ENCODE measurements at regions of chr17 and their contacts with region 1.

Region 1: DNA sequence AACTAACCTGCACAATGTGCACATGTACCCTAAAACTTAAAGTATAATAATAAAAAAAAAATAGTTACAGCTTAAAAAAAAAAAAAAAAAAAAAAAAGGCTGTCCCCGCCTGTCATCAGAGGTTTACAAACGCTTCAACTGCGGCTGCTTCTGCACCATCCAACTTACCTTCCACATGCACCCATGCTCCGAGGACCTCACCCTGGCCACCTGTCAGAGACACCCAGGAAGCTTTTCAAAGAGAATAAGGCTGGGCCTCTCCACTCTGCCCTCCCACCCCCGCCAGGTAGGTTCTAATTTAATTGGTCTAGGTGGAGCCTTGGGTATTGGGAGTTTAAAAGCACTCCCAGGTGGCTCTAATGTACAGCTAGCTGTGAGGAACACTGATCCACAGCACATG is 64.9 kb downstream of the COPRS start:
- DNase-seq: no peak
- H3K4me3 ChIP-seq: no peak overlapping the region
- H3K27ac ChIP-seq: no peak overlapping the region
- H3K4me1 ChIP-seq: no peaks in the 10 kb centered on the region
- H3K27me3 ChIP-seq: 0 out of 2 replicates have a peak, but pooled peaks cover 3% of the 10 kb centered on the region
- CTCF ChIP-seq: no peak

Region 2: DNA sequence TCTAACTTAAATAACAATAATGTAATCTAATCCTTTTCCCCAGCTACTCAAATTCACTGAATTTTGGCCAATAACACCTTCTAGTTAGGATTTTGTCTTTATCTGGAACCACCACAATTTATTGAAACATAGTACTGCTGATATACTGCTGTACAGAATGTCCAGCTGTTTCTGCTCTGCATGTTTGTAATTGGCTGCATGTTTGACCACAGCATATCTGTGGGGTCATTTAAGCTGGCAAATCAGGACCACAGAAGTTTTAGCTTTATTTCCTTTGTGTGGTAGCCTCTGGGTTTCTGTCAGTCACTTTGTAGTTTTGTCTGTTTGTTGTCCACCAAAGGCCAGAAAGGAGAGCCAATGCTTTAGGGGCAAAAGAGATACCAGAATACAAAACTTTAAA is 424.8 kb before region 1 on chr17:
- CTCF ChIA-PET with region 1: no interaction called
- POLR2A ChIA-PET with region 1: no interaction called
- intact Hi-C with region 1: no loop called
- DNase-seq: no peak
- H3K4me3 ChIP-seq: no peak overlapping the region
- H3K27ac ChIP-seq: no peak overlapping the region
- H3K4me1 ChIP-seq: no peaks in the 10 kb centered on the region
- H3K27me3 ChIP-seq: no peaks in the 10 kb centered on the region
- CTCF ChIP-seq: no peak

Region 3: DNA sequence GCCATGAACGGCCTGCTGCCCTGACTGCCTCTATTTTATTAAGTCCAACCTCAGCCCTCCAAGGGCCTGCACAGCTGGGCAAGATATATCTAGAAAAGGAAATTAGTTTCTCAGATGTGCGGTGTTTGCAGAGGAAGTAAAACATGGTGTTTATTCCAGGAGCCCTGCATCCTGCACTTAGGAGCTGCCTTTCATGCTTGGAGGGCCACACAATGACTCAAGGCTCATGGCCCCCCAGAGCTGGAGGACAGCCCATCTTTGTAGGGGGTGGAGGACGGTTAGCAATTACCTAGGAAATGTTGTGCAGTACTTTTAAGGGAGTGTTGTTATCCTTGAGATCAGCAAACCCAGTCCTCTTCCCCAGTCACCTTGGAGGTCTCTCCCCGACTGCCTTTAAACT is 15.6 kb before region 1 on chr17:
- CTCF ChIA-PET with region 1: no interaction called
- POLR2A ChIA-PET with region 1: no interaction called
- intact Hi-C with region 1: no loop called
- DNase-seq: no peak
- H3K4me3 ChIP-seq: no peak overlapping the region
- H3K27ac ChIP-seq: no peak overlapping the region
- H3K4me1 ChIP-seq: no peaks in the 10 kb centered on the region
- H3K27me3 ChIP-seq: no peaks in the 10 kb centered on the region
- CTCF ChIP-seq: no peak

Region 4: GRCh38 chr17:31820691-31821435 is 26.8 kb after region 1 on chr17:
- CTCF ChIA-PET with region 1: no interaction called
- POLR2A ChIA-PET with region 1: interaction called, 12 read pairs
- intact Hi-C with region 1: no loop called
- DNase-seq: no peak
- H3K4me3 ChIP-seq: no peak overlapping the region
- H3K27ac ChIP-seq: no peak overlapping the region
- H3K4me1 ChIP-seq: no peaks in the 10 kb centered on the region
- H3K27me3 ChIP-seq: no peaks in the 10 kb centered on the region
- CTCF ChIP-seq: no peak